Colonic mucosa (tissue), 4 donors: ENCODE measurements at regions of chr4 and their contacts with region 1.

Region 1: DNA sequence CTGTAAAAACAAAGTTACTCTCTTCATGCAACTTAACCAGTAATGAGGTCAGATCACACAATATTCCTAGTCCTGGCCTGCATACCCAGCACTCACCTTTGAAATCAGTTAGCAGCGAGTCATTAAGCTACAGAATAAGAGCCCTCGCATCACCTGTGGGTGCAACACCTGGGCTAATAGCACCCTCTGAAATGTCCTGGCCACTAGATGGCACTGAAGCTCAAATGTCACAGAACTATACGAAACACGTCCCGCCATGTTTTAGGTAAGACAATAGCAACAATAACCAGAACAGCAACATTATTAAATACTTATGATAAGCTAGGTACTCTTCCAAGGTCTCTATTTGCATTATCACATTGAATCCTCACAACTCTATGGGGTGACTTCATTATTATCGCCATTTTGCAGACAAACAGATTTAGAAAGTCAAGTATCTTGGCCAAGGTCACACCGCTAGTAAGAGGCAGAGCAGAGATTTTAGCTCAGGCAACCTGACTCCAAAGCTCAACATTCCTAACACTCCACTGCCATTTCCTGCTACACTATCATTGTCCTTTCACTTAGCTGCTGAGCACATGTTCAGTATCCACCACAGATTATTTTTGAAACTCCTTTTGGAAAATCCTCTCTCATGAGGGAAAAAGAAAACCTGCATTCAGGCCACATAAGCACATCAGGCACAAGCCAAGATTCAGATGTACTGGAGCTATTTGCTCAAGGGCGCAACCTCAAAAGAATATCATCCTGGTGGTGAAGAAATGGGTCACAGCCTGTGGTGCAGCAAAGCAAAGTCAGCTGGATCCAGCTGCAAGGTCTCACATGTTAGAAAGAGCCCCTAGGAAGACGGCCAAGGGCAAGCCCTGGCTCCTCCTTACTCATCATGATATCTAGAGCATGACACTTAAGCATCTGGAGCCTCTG is 59.5 kb upstream of the KDR start:
- DNase-seq: peak; percentile 66
- H3K4me3 ChIP-seq: no peak overlapping the region
- H3K27ac ChIP-seq: no peak overlapping the region
- H3K4me1 ChIP-seq: no peaks in the 10 kb centered on the region
- H3K27me3 ChIP-seq: no peaks in the 10 kb centered on the region
- CTCF ChIP-seq: peak; percentile 31

Region 2: DNA sequence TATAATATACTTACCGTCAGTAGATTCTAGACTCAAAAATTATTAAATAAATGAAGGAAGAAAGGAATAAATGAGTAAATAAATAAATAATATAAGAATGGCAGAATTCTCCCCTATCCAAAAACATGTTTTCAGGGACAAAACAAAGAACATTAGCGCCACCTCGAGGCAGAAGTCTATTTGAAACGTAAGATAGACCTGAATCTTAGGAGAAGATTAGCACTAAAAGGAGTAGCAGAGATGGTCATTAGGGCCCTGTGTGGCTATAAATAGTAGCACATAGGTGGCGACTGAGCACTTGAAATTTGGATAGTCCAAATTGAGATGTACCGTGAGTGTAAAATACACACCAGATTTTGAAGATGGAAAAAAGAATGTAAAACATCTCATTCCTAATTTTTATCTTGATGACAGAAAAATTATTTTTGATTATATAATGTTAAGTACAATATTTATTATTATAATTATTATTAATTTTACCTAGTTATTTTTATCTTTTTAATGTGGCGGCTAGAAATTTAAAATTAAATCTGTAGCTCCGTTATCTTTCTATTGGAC is 136.9 kb after region 1 on chr4:
- intact Hi-C with region 1: loop called (anchors 5 kb)
- DNase-seq: peak; percentile 81
- H3K4me3 ChIP-seq: no peak overlapping the region
- H3K27ac ChIP-seq: no peak overlapping the region
- H3K4me1 ChIP-seq: no peaks in the 10 kb centered on the region
- H3K27me3 ChIP-seq: no peaks in the 10 kb centered on the region
- CTCF ChIP-seq: peak; percentile 44

Region 3: GRCh38 chr4:55588160-55588559 is 403.3 kb after region 1 on chr4:
- intact Hi-C with region 1: loop called (anchors 10 kb)
- DNase-seq: no peak
- H3K4me3 ChIP-seq: no peak overlapping the region
- H3K27ac ChIP-seq: no peak overlapping the region
- H3K4me1 ChIP-seq: no peaks in the 10 kb centered on the region
- H3K27me3 ChIP-seq: no peaks in the 10 kb centered on the region
- CTCF ChIP-seq: no peak